Gastrocnemius medialis (tissue), 4 donors: ENCODE measurements at regions of chr2 and their contacts with region 1.

Region 1: DNA sequence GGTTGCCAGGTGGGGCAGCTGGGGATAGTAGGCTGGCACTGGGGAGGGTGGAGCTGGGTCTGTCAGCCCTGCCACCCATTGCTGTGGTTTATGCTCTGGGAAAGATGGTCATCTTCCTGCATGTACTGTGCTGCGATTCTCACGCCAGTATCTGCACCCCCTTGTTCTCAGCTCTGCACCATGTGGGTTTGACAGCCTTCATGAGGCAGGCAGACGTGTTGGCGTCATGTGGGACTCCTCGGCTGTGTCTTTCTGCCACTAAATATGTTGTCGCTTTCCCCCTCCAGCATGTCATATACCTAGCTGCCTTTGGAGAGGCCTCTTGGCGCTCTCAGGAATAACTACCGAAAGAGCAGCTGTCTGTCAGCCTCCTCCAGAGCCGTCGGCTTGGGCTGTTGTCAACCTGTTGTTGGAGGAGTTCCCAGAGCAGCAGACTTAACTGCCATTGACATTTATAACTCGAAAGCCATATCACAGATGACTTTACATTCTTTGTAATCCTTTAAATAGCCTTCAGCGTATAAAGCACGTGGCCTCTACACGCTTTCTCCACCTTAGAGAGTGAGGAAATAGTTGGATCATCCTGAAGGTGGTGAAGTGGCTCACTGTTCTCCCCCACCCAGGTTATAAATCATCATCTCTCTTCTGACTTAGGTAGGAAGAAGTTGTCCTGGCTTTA is 80.4 kb upstream of the MGAT5 start:
- DNase-seq: peak; percentile 65 to 68
- ATAC-seq: peak; percentile 90 to 91
- H3K4me3 ChIP-seq: no peak overlapping the region
- H3K27ac ChIP-seq: peak overlapping the region; percentile 32 to 80 (median 62)
- H3K4me1 ChIP-seq: peaks cover 24 to 31% of the 10 kb centered on the region in 2 donors
- H3K27me3 ChIP-seq: no peaks in the 10 kb centered on the region
- CTCF ChIP-seq: no peak
- POLR2A ChIP-seq: no peak

Region 2: DNA sequence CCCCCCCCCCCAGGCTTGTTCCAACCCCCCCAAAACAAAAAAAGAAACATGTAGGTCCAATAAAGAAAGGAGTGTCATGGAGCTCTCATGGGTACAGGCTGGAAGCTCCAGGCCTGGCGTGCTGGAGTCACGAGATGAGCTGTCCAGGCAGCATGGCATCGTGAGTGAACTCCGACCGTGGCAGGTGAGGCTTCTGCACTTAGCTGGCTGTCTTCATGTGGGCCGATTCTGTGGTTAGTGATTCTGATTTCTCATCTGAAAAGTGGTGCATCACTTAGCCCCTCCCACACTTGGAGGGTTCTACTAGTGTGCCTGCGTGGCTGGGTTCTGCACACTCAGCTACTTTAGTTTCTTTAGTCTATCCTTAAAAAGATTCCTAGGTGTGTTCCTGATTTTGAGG is 46.0 kb before region 1 on chr2:
- in situ Hi-C with region 1: no loop called
- intact Hi-C with region 1: no loop called
- DNase-seq: no peak
- ATAC-seq: no peak
- H3K4me3 ChIP-seq: no peak overlapping the region
- H3K27ac ChIP-seq: no peak overlapping the region
- H3K4me1 ChIP-seq: peaks cover 4 to 5% of the 10 kb centered on the region in 2 donors
- H3K27me3 ChIP-seq: no peaks in the 10 kb centered on the region
- CTCF ChIP-seq: no peak
- POLR2A ChIP-seq: no peak

Region 3: GRCh38 chr2:134139611-134140010 is 33.9 kb before region 1 on chr2:
- in situ Hi-C with region 1: no loop called
- intact Hi-C with region 1: loop called (anchors 1 kb)
- DNase-seq: no peak
- ATAC-seq: peak; percentile 56 to 75
- H3K4me3 ChIP-seq: no peak overlapping the region
- H3K27ac ChIP-seq: no peak overlapping the region
- H3K4me1 ChIP-seq: peaks cover 35 to 42% of the 10 kb centered on the region in 2 donors
- H3K27me3 ChIP-seq: peaks cover 0 to 16% (median 5%) of the 10 kb centered on the region in 3 donors
- CTCF ChIP-seq: no peak
- POLR2A ChIP-seq: no peak